GM18951 (cell line): ENCODE measurements at regions of chr11 and their contacts with region 1.

Region 1: GRCh38 chr11:31107062-31107461 is 262.5 kb downstream of the DCDC1 start:
- POLR2A ChIP-seq: no peak

Region 2: GRCh38 chr11:30992513-30992849 is 114.6 kb before region 1 on chr11:
- in situ Hi-C with region 1: no loop called
- POLR2A ChIP-seq: no peak

Region 3: DNA sequence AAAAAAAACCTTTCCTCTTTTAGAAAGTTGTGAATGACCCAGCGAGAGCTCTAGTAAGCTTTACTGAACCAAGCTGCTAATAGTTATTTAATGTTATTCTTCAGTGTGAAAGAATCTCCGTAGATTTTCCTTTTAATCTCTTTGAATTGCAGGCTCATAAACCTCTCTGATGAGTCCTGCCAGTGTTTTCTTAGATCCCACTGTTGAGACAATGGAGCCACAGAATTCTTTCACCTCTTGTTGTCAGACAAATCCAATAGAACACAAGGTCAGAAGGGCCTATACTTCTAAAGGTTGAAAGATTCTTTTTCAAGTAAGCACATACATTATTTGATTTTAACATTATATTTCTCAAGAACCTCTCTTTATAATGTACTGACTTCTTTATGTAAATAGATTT is 314.8 kb after region 1 on chr11:
- in situ Hi-C with region 1: no loop called
- POLR2A ChIP-seq: no peak

Region 4: GRCh38 chr11:31826536-31827438 is 719.7 kb after region 1 on chr11:
- in situ Hi-C with region 1: loop called (anchors 25 kb)
- POLR2A ChIP-seq: no peak